ENCODE measurements at regions of chr11 and their contacts with region 1.

Region 1: DNA sequence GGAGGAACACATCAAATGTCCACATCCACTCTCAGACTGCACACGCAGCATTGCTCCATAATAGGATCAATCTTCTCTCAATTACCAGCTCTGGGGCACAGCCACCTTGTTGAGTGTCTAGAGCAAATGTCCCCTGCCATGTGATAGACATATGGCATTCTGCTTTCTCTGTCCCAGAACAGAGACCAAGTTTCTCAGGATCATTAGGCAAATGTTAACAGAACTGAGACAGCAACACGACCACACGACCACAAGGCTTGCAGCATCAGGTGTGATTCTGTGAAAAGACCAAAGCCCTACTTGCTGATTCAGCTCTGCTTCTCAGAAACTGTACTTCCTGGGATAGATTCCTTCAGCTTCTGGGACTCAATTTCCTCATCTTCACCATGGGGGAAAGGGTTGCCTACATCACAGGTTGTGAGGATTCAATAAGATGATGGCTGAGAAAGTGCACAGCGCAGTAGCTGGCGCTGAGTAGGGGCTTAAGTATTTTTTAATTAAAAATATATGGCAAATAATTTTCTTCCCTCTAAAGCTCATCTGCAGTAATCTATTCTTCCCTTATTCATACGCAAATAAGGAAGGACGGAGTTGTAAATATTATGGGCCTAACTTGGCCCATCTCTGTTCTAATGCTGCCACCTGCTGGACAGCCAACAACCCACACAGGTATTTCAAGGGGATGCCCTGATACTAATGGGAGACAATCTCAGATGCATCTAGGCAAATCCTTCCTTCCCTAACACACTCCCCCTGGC is 54.3 kb upstream of the USP47 start:
- DNase-seq: peak; percentile 3
- H3K4me3 ChIP-seq: no peak overlapping the region
- H3K27ac ChIP-seq: no peak overlapping the region
- H3K4me1 ChIP-seq: peaks cover 0 to 14% (median 0%) of the 10 kb centered on the region in 3 donors
- H3K27me3 ChIP-seq: no peaks in the 10 kb centered on the region
- CTCF ChIP-seq: peak; percentile 77 to 94 (median 90)
- POLR2A ChIP-seq: no peak

Region 2: DNA sequence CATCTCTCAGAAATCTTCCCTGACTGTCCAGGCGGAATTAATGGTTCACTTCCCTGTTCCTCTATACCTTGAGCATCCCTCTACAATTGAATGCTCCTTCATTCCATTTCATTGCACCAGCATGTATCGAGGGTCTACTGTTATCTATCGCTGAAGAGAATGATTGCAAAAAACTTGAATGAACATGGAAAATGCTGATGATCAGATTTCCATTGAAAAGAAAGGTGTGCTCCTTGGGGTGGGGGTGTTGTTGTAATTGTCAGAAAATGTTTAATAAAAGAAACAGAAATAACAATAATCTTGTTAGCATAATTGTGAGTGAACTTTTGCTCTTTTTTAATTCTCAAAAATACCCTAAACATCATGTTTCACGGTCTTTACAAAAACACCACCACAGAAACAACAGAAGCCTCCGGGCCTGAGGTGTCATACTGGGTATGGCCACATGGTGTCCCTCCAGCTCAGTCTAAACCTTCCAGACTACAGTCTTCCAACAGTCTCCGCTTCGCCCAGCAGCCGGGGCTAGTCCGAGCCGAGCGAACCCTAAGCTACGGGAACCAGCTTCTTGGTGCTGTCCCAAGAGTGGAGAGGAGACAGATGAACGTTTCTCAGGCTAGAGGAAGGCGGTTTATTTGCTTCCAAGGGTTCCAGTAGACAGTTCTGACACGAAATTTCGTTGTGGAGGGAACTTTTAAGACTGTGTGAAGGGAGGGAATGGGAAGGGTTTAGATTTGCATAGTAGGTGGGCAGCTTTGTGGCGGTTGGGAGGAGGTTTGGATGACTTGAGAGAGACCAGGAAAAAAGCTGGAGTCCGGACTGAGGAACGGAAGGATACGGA is 853.8 kb before region 1 on chr11:
- intact Hi-C with region 1: loop called (anchors 10 kb)
- DNase-seq: peak; percentile 60
- H3K4me3 ChIP-seq: peak overlapping the region; percentile 27 to 64 (median 46)
- H3K27ac ChIP-seq: peak overlapping the region; percentile 68 to 87 (median 87)
- H3K4me1 ChIP-seq: peaks cover 8 to 49% (median 11%) of the 10 kb centered on the region in 3 donors
- H3K27me3 ChIP-seq: no peaks in the 10 kb centered on the region
- CTCF ChIP-seq: peak; percentile 90 to 98 (median 98)
- POLR2A ChIP-seq: peak in 1 of 4 donors; percentile 14

Region 3: DNA sequence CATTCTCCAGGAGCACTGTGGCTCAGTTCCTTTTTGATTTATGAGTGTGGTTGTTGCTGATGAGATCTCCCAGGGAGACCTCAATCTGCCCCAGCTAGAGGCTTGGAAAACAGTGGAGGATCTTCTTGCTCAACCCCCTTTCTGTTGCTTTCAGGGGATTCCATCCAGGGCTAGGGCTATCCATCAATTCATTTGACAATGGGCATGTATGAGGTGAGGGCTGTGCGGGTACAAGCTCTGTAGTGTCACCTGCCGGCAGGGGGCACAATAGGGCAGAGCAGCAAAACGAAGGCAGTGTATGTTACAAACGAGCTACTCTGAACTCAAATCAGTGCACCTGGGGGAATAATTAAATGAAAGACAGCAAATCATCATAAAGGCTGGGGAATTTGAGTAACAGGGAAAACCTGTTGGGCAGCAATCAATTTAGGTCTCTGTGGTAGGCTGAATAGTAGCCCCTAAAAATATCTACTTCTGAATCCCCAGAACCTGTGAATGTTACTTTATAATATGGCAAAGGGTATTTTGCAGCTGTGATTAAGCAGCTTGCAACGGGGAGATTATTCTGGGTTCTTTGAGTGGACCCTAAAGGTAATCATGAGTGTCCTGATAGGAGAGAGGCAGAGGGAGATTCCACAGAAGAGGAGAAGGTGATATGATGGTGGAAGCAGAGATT is 759.3 kb before region 1 on chr11:
- intact Hi-C with region 1: loop called (anchors 5 kb)
- DNase-seq: no peak
- H3K4me3 ChIP-seq: no peak overlapping the region
- H3K27ac ChIP-seq: no peak overlapping the region
- H3K4me1 ChIP-seq: no peaks in the 10 kb centered on the region
- H3K27me3 ChIP-seq: no peaks in the 10 kb centered on the region
- CTCF ChIP-seq: peak; percentile 49 to 85 (median 77)
- POLR2A ChIP-seq: no peak

Region 4: GRCh38 chr11:11621573-11622319 is 165.7 kb before region 1 on chr11 and contains the start of gene GALNT18:
- intact Hi-C with region 1: loop called (anchors 10 kb)
- DNase-seq: no peak
- H3K4me3 ChIP-seq: peak within 1 kb of the TSS; percentile 53 to 68 (median 61)
- H3K27ac ChIP-seq: peak within 1 kb of the TSS; percentile 66 to 85 (median 72)
- H3K4me1 ChIP-seq: peaks cover 8 to 51% (median 10%) of the 10 kb centered on the region in 3 donors
- H3K27me3 ChIP-seq: peaks cover 0 to 29% (median 0%) of the 10 kb centered on the region in 4 donors
- CTCF ChIP-seq: peak in 5 of 6 experiments; percentile 40 to 73 (median 55)
- POLR2A ChIP-seq: peak in 2 of 4 donors; percentile 75 to 76
- total RNA-seq, gene GALNT18: 4.7 to 20.4 (median 14.1) TPM

Region 5: GRCh38 chr11:11895672-11896071 is 108.2 kb after region 1 on chr11:
- intact Hi-C with region 1: no loop called
- DNase-seq: no peak
- H3K4me3 ChIP-seq: no peak overlapping the region
- H3K27ac ChIP-seq: no peak overlapping the region
- H3K4me1 ChIP-seq: no peaks in the 10 kb centered on the region
- H3K27me3 ChIP-seq: no peaks in the 10 kb centered on the region
- CTCF ChIP-seq: peak in 2 of 6 experiments; percentile 14 to 34
- POLR2A ChIP-seq: no peak

Measured in esophagus squamous epithelium (tissue), 5 donors.